MCF 10A (cell line): ENCODE measurements at regions of chr19 and their contacts with region 1.

Region 1: DNA sequence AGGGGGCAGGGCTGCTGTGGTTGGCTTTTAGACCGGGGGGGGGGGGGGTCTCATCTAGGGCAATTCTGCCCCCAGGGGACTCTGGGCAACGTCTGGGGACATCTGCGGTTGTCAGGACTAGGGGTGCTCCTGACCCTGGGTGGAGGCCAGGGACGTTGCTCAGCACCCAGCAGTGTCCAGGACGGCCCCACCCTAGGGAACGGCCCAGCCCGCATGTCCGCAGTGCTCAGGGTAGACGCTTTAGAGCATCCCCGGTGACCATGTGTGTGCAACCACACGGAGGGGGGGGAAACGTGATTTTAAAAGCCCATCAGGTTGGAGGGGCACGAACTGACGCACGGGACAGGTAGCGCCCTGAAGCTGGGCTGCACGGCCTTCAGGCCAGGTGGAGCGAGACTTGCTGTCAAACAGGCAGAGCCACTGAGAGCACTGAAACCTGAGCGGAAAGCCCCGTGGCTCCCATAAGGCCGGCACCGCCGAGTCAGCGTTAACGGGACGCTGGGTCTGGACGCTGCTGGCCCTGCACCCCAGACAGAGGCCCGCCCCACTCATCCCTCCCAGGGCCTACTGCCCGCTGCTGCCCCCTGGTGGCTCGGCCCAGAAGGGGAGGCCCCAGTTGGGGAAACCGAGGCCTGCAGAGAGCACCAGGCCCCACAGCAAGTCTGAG is 8.3 kb downstream of the CACTIN start:
- DNase-seq: peak; percentile 49
- H3K4me3 Mint-ChIP-seq: no peak overlapping the region
- H3K27ac Mint-ChIP-seq: no peak overlapping the region
- H3K4me1 Mint-ChIP-seq: no peaks in the 10 kb centered on the region
- H3K27me3 Mint-ChIP-seq: no peaks in the 10 kb centered on the region
- CTCF ChIP-seq: peak; percentile 85

Region 2: DNA sequence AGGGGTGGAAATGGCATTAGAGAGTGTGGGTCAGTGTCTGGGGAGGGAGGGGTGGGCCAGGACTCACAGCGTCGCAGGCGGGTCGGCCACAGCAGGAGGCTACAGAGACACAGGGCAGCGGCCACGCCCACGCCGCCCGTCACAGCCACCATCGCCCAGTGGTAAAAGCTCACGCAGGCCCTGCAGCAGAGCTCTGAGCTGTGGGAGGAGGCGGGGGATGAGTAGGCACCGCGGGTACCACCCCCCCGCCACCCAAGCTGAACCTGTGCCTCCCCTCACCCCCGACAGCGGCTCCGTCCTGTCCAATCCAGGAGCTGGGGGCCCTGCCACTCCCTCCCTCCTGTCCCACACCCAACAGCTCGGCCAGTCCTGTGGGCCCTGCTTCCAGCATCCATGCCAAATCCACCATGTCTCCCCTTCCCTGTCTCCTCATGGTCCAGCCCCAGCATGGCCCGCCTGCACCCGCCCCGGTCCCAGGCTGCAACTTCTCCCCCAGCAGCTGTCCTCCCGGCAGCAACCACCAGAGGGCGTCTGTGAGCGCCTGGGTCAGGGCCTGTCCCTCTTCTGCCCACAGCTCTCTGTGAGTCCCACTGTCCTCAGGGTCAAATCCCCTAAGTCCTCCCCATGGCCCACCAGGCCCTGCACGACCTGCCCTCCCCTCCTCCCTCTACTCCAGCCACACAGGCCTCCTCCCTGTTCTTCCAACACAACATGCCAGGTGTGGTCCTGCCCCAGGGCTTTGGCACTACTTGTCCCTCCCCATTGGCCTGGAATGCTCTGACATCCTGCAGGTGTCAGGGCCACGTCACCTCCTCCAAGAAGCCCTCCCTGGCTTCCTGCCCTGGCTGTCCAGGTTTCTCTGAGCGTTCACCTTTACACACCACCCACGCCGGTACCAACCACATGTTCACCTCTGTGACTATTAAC is 73.3 kb before region 1 on chr19:
- CTCF ChIA-PET with region 1: interaction called, 8 read pairs
- POLR2A ChIA-PET with region 1: no interaction called
- intact Hi-C with region 1: loop called (anchors 1 kb)
- DNase-seq: peak; percentile 77
- H3K4me3 Mint-ChIP-seq: no peak overlapping the region
- H3K27ac Mint-ChIP-seq: peak overlapping the region; percentile 85
- H3K4me1 Mint-ChIP-seq: peaks cover 11% of the 10 kb centered on the region
- H3K27me3 Mint-ChIP-seq: no peaks in the 10 kb centered on the region
- CTCF ChIP-seq: peak; percentile 97